ENCODE measurements at regions of chr3 and their contacts with region 1.

Region 1: DNA sequence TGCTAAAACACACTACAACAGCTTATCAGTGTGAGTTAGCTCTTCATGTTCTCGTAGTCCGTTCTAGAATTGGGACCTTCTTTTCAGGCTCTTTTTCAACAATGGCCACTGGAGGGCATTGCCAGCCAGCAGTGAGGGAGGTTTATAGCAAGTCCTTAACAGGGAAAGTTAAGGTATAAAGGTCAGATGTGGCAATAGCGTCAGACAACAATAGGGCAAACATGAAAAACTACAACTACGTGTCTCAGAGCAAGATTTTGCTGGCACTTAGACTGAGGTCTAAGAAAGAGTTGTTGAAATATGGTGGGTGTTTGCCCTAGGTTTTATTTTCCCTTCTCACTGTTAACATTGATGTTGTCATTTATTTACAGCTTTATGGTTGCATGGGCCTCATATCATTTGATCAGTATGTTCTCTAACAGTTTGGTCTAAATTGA is 161.4 kb downstream of the GMNC start:
- DNase-seq: peak; percentile 44
- ATAC-seq: peak; percentile 87
- H3K4me3 ChIP-seq: no peak overlapping the region
- H3K27ac ChIP-seq: no peak overlapping the region
- H3K4me1 ChIP-seq: no peaks in the 10 kb centered on the region
- H3K27me3 ChIP-seq: no peaks in the 10 kb centered on the region
- CTCF ChIP-seq: peak; percentile 54
- POLR2A ChIP-seq: no peak
- RAD21 ChIP-seq: peak; percentile 62

Region 2: DNA sequence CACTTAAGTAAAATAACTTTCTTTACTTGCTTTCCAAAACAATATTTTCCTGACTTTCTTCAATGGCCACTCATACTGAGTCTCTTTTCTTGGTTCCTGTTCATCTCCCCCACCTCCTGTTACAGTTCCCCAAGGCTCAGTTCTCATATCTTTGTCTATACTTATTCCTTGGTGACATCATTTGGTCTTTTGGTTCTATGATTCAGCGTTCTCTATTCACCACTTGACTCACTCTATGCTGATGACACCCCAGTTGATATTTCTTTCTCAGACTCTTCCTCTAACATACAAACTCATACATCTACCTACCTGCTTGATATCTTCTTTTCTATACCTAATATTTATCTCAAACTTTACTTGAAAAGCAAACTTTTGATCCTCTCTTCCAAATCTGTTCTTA is 495.4 kb before region 1 on chr3:
- CTCF ChIA-PET with region 1: no interaction called
- POLR2A ChIA-PET with region 1: no interaction called
- dilution Hi-C with region 1: no loop called
- in situ Hi-C with region 1: no loop called
- intact Hi-C with region 1: loop called (anchors 5 kb)
- DNase-seq: peak; percentile 92
- ATAC-seq: peak; percentile 86
- H3K4me3 ChIP-seq: no peak overlapping the region
- H3K27ac ChIP-seq: no peak overlapping the region
- H3K4me1 ChIP-seq: no peaks in the 10 kb centered on the region
- H3K27me3 ChIP-seq: no peaks in the 10 kb centered on the region
- CTCF ChIP-seq: no peak
- POLR2A ChIP-seq: no peak
- RAD21 ChIP-seq: 0 out of 2 replicates have a peak, but pooled peaks have one; percentile 23

Region 3: GRCh38 chr3:190321789-190322603 is 379.1 kb before region 1 on chr3 and contains the start of gene CLDN1:
- CTCF ChIA-PET with region 1: no interaction called
- POLR2A ChIA-PET with region 1: no interaction called
- dilution Hi-C with region 1: no loop called
- in situ Hi-C with region 1: no loop called
- intact Hi-C with region 1: loop called (anchors 10 kb)
- DNase-seq: peak; percentile 69
- ATAC-seq: peak; percentile 93
- H3K4me3 ChIP-seq: peak within 1 kb of the TSS; percentile 66
- H3K27ac ChIP-seq: peak within 1 kb of the TSS; percentile 3; the same call in 1 of the 2 replicates
- H3K4me1 ChIP-seq: peaks cover 14% of the 10 kb centered on the region
- H3K27me3 ChIP-seq: no peaks in the 10 kb centered on the region
- CTCF ChIP-seq: peak; percentile 95
- POLR2A ChIP-seq: peak; percentile 63; the same call in 1 of the 2 replicates
- RAD21 ChIP-seq: peak; percentile 81
- total RNA-seq, gene CLDN1: 4.7 and 7.2 TPM in 2 replicates

Region 4: GRCh38 chr3:190513409-190514162 is 187.5 kb before region 1 on chr3 and contains the start of gene IL1RAP:
- CTCF ChIA-PET with region 1: interaction called, 9 read pairs
- POLR2A ChIA-PET with region 1: no interaction called
- dilution Hi-C with region 1: no loop called
- in situ Hi-C with region 1: no loop called
- intact Hi-C with region 1: loop called (anchors 1 kb)
- DNase-seq: peak; percentile 88
- ATAC-seq: peak; percentile 98
- H3K4me3 ChIP-seq: peak within 1 kb of the TSS; percentile 60
- H3K27ac ChIP-seq: peak within 1 kb of the TSS; percentile 60
- H3K4me1 ChIP-seq: peaks cover 7% of the 10 kb centered on the region; the same call in 1 of the 2 replicates
- H3K27me3 ChIP-seq: no peaks in the 10 kb centered on the region
- CTCF ChIP-seq: peak; percentile 77
- POLR2A ChIP-seq: peak; percentile 56
- RAD21 ChIP-seq: peak; percentile 46
- total RNA-seq, gene IL1RAP: 9.4 and 11.3 TPM in 2 replicates

Region 5: GRCh38 chr3:190533511-190534277 is 167.4 kb before region 1 on chr3:
- CTCF ChIA-PET with region 1: interaction called, 5 read pairs
- POLR2A ChIA-PET with region 1: interaction called, 3 read pairs
- dilution Hi-C with region 1: no loop called
- in situ Hi-C with region 1: no loop called
- intact Hi-C with region 1: loop called (anchors 5 kb)
- DNase-seq: peak; percentile 93
- ATAC-seq: peak; percentile 85
- H3K4me3 ChIP-seq: no peak overlapping the region
- H3K27ac ChIP-seq: peak overlapping the region; percentile 97
- H3K4me1 ChIP-seq: peaks cover 10% of the 10 kb centered on the region
- H3K27me3 ChIP-seq: no peaks in the 10 kb centered on the region
- CTCF ChIP-seq: no peak
- POLR2A ChIP-seq: no peak
- RAD21 ChIP-seq: no peak

Region 6: DNA sequence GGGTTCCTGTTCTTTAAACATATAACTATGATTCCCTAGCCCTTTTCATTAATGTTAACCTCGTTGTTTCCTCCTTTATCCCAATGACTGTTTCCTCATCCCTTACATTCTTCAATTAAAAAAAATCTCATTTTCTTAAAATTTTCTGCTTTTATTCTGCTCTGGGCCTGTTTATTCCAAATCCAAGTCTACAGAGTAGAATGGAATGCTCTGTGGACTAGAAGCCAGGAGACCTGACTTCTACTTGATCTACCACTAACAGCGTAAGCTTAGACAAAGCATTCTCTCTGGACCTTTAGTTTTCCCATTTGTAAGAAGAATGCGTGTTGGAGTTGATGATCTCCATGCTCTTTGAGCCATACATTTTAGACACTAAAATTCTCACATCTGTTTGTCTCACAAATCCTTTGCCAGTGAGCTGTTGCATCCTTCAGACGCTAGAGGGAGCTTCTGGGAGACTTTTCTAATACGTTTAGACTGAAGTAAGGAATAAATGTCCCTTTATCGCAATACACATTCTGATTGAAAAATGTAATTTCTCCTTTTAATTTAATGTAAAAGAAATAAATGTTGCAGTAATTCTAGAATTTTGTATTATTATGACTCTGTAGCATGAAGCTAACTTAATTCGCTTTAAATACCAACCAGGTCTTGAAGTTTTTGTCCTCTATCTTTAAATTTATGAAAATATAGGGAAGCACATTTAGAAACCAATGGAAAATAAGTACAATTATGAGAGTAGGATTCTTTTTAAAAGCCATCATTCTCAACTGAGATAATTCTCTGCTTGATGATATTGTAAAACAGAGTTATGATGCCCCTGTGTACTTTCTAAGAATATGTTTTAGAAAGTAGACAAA is 183.1 kb after region 1 on chr3:
- CTCF ChIA-PET with region 1: interaction called, 5 read pairs
- POLR2A ChIA-PET with region 1: no interaction called
- dilution Hi-C with region 1: no loop called
- in situ Hi-C with region 1: no loop called
- intact Hi-C with region 1: loop called (anchors 2 kb)
- DNase-seq: peak; percentile 66
- ATAC-seq: peak; percentile 94
- H3K4me3 ChIP-seq: no peak overlapping the region
- H3K27ac ChIP-seq: no peak overlapping the region
- H3K4me1 ChIP-seq: no peaks in the 10 kb centered on the region
- H3K27me3 ChIP-seq: no peaks in the 10 kb centered on the region
- CTCF ChIP-seq: peak; percentile 87
- POLR2A ChIP-seq: no peak
- RAD21 ChIP-seq: peak; percentile 70

Region 7: DNA sequence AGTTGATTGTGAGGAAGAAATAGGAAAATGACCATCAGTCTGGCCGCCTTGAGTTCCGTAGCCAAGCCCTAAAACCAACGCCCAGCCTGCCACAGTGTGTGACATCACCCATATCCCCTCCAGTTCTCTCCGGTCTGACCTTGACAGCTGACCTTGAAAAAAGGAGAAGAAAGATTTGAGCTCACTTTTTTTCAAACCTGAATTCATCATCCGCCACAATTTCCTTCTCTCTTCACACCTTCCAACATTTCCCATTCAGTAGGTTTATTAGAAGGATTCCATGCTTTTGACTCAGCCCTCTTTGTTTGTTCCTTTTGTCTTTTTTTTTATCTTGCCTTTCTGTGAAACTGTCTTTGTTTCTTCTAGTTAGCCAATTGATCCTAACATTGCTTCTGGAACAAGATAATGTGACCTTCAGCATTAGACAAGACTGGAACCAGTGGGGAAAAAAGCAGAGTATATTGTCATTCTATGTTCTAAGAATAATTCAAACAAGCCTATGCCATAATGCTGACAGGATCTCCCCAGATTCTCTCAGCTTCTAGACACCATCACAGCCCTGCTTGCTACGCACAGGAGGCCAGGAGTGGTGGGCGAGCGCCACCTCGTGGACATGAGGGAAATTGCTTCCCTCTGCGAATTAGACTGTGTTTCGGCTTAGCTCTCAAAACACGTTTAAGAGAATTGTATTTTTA is 1743.1 kb after region 1 on chr3:
- CTCF ChIA-PET with region 1: no interaction called
- POLR2A ChIA-PET with region 1: no interaction called
- dilution Hi-C with region 1: no loop called
- in situ Hi-C with region 1: no loop called
- intact Hi-C with region 1: loop called (anchors 10 kb)
- DNase-seq: peak; percentile 53
- ATAC-seq: peak; percentile 97
- H3K4me3 ChIP-seq: no peak overlapping the region
- H3K27ac ChIP-seq: no peak overlapping the region
- H3K4me1 ChIP-seq: no peaks in the 10 kb centered on the region
- H3K27me3 ChIP-seq: no peaks in the 10 kb centered on the region
- CTCF ChIP-seq: peak; percentile 98
- POLR2A ChIP-seq: 0 out of 2 replicates have a peak, but pooled peaks have one; percentile 33
- RAD21 ChIP-seq: peak; percentile 97